Activated naive CD4-positive, alpha-beta T cell treated with anti-CD3 and anti-CD28 coated beads, Interleukin-2, amount 10 ng/mL, durations not matched to agents 7 days and 5 days (primary cell): ENCODE measurements at regions of chr3 and their contacts with region 1.

Region 1: DNA sequence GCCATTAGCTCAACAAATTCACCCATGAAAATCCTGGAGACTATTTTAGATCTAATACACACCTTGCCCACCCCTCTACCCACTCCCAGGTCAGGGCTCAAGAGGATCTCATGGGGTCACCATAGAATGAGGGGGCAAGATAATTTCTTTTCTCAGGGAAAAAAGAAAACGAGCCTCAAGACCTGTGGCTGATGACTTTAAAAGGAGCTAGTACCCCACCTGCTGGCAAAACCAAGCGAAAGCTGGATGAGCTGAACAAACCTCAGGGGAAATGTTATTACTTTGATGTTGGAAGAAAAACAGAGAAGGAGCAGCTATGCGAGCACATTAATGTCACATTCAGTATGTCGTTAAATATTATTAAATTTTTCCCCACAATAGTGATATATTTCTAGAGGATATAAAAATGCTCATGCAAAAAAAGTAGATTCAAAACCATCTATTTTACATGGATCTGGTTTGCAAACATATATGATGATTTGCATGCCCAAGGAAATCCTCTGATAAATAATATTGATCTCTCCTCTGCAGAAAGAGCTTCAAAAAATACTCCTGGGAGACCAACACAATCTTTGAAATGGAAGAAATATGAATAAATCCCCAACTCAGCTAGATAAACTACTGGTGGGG is 37.7 kb downstream of the PLD1 start:
- DNase-seq: peak; percentile 67
- H3K4me3 Mint-ChIP-seq: no peak overlapping the region
- H3K27ac Mint-ChIP-seq: no peak overlapping the region
- H3K4me1 Mint-ChIP-seq: no peaks in the 10 kb centered on the region
- H3K27me3 Mint-ChIP-seq: peaks cover 8% of the 10 kb centered on the region

Region 2: GRCh38 chr3:170740726-170741591 is 1031.6 kb before region 1 on chr3:
- CTCF ChIA-PET with region 1: no interaction called
- DNase-seq: no peak
- H3K4me3 Mint-ChIP-seq: no peak overlapping the region
- H3K27ac Mint-ChIP-seq: no peak overlapping the region
- H3K4me1 Mint-ChIP-seq: no peaks in the 10 kb centered on the region
- H3K27me3 Mint-ChIP-seq: peaks cover 8% of the 10 kb centered on the region

Region 3: GRCh38 chr3:170961616-170962400 is 810.7 kb before region 1 on chr3:
- CTCF ChIA-PET with region 1: interaction called, 26 read pairs
- DNase-seq: no peak
- H3K4me3 Mint-ChIP-seq: no peak overlapping the region
- H3K27ac Mint-ChIP-seq: no peak overlapping the region
- H3K4me1 Mint-ChIP-seq: no peaks in the 10 kb centered on the region
- H3K27me3 Mint-ChIP-seq: no peaks in the 10 kb centered on the region

Region 4: GRCh38 chr3:171049861-171050444 is 722.6 kb before region 1 on chr3:
- CTCF ChIA-PET with region 1: interaction called, 24 read pairs
- DNase-seq: peak; percentile 65
- H3K4me3 Mint-ChIP-seq: no peak overlapping the region
- H3K27ac Mint-ChIP-seq: no peak overlapping the region
- H3K4me1 Mint-ChIP-seq: no peaks in the 10 kb centered on the region
- H3K27me3 Mint-ChIP-seq: peaks cover 25% of the 10 kb centered on the region

Region 5: GRCh38 chr3:171646357-171647133 is 126.0 kb before region 1 on chr3:
- CTCF ChIA-PET with region 1: interaction called, 16 read pairs
- DNase-seq: no peak
- H3K4me3 Mint-ChIP-seq: no peak overlapping the region
- H3K27ac Mint-ChIP-seq: no peak overlapping the region
- H3K4me1 Mint-ChIP-seq: no peaks in the 10 kb centered on the region
- H3K27me3 Mint-ChIP-seq: no peaks in the 10 kb centered on the region

Region 6: DNA sequence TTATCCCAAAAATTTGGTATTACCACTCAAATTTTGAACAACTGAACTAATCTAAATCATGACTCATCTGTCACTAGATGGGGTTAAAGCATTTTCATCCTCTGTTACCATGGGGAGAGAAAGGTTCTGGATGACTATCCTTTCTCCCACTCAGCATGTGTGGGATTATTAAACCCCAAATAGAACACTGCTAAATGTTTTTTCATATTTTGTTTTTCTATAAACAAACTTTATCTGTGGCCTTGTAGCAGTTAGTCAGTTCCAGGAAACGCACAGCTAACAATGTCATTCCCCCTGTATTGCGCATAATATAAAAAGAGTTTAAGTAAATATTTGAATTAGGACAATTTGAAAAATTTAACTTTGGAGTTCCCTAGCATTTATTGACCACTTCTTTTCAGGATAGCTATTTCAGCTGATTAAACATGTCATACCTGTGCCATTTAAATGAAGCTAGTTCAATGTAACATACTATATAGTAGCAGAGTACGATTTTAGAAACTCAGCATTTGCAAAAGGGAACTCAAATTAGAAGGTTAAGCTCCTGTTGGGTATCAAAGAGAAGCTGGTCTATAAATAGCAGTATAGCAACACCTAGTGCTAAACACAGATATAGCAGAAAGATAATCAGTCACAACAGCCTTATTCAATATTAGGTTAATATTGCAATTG is 61.4 kb after region 1 on chr3:
- CTCF ChIA-PET with region 1: interaction called, 16 read pairs
- DNase-seq: no peak
- H3K4me3 Mint-ChIP-seq: no peak overlapping the region
- H3K27ac Mint-ChIP-seq: no peak overlapping the region
- H3K4me1 Mint-ChIP-seq: no peaks in the 10 kb centered on the region
- H3K27me3 Mint-ChIP-seq: peaks cover 17% of the 10 kb centered on the region

Region 7: GRCh38 chr3:171950373-171950772 is 177.8 kb after region 1 on chr3:
- CTCF ChIA-PET with region 1: no interaction called
- DNase-seq: no peak
- H3K4me3 Mint-ChIP-seq: no peak overlapping the region
- H3K27ac Mint-ChIP-seq: no peak overlapping the region
- H3K4me1 Mint-ChIP-seq: no peaks in the 10 kb centered on the region
- H3K27me3 Mint-ChIP-seq: peaks cover 8% of the 10 kb centered on the region